Gastrocnemius medialis (tissue), 4 donors: ENCODE measurements at regions of chr11 and their contacts with region 1.

Region 1: DNA sequence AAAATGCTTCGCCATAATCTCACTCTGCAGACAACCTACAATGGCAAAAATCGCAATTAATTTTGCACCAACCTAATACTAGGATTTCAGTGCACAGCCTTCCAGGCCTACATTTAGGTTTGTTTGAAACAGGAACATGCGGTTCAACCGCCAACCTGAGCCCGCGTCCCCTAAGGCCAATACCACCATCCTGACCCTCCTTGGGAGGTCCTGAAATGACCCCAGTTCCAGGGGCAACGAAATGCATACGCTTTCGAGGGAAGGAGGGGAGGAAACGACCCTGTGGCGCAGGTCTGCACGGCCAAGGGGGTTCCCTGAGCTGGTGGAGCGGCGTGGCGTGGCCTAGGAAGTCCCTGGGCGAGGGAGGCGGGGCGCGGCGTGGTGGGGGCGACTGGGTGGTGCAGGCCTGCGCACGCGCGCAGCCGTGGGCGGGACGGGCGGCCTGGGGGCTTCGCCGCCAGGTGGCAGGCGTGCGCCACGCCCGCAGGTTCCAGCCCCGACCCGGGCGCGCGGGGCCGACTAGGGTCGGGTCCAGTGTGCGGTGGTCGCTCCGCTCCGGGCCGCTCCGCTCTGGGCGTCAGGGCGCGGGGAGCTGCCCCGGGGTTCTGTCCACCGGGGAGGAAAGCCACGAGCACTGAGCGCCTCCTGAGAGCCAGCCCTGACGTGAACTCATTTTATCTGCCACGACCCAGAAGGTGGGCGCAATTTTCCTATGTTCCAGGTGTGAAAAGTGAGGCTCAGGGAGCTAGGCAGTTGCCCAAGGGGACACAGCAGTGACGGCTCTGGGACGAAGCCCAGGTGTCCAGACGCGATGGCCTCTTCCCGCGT is 94.1 kb downstream of the SWAP70 start:
- DNase-seq: peak; percentile 67 to 73
- ATAC-seq: peak; percentile 51 to 70
- H3K4me3 ChIP-seq: peak overlapping the region; percentile 61 to 86 (median 69)
- H3K27ac ChIP-seq: peak overlapping the region; percentile 76 to 86 (median 83)
- H3K4me1 ChIP-seq: peaks cover 18 to 25% of the 10 kb centered on the region in 2 donors
- H3K27me3 ChIP-seq: no peaks in the 10 kb centered on the region
- CTCF ChIP-seq: peak in 4 of 5 experiments; percentile 96 to 98 (median 98)
- POLR2A ChIP-seq: peak; percentile 52 to 53

Region 2: DNA sequence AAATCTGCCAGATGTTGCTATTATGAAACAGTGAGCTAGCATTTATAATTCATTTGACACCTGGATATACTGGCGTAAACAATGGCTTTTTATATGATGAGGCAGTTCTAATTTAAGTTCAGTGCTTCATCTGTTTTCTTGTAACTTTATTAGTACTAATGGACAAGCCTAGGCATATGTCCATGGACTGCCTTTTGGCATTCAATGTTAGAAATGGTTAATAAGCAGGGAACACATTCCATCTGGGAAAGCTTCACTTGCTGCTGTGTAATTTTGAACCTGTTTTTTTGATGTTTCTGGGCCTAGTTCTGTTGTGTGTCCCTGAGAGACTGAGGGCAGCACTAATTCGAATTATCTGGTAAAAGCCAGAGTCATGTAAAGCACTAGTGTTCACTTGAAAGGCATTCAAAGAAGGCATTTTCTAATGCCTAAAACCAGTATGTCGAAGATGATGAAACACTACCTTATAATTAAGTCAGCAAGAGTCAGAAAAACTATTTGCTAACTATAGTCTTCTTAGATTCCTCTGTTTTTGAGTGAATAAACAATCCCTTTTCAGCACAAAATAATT is 44.4 kb after region 1 on chr11:
- in situ Hi-C with region 1: no loop called
- intact Hi-C with region 1: loop called (anchors 2 kb)
- DNase-seq: peak in 1 of 2 donors; percentile 25
- ATAC-seq: peak; percentile 96 to 97
- H3K4me3 ChIP-seq: no peak overlapping the region
- H3K27ac ChIP-seq: peak overlapping the region; percentile 72 to 80 (median 76)
- H3K4me1 ChIP-seq: peaks cover 31 to 38% of the 10 kb centered on the region in 2 donors
- H3K27me3 ChIP-seq: no peaks in the 10 kb centered on the region
- CTCF ChIP-seq: no peak
- POLR2A ChIP-seq: no peak

Region 3: GRCh38 chr11:9962722-9963121 is 204.7 kb after region 1 on chr11:
- in situ Hi-C with region 1: loop called in 1 of 4 experiments (anchors 10 kb)
- intact Hi-C with region 1: no loop called
- DNase-seq: no peak
- ATAC-seq: no peak
- H3K4me3 ChIP-seq: no peak overlapping the region
- H3K27ac ChIP-seq: no peak overlapping the region
- H3K4me1 ChIP-seq: no peaks in the 10 kb centered on the region
- H3K27me3 ChIP-seq: no peaks in the 10 kb centered on the region
- CTCF ChIP-seq: no peak
- POLR2A ChIP-seq: no peak

Region 4: GRCh38 chr11:10208131-10208575 is 450.1 kb after region 1 on chr11:
- in situ Hi-C with region 1: no loop called
- intact Hi-C with region 1: loop called (anchors 5 kb)
- DNase-seq: no peak
- ATAC-seq: peak; percentile 61 to 87
- H3K4me3 ChIP-seq: no peak overlapping the region
- H3K27ac ChIP-seq: peak overlapping the region in 1 of 4 donors; percentile 9
- H3K4me1 ChIP-seq: peaks cover 0 to 7% of the 10 kb centered on the region in 2 donors
- H3K27me3 ChIP-seq: no peaks in the 10 kb centered on the region
- CTCF ChIP-seq: peak; percentile 68 to 80 (median 79)
- POLR2A ChIP-seq: no peak

Region 5: GRCh38 chr11:10322830-10323792 is 565.1 kb after region 1 on chr11:
- in situ Hi-C with region 1: loop called (anchors 10 to 25 kb)
- intact Hi-C with region 1: loop called (anchors 1 kb)
- DNase-seq: peak; percentile 37 to 49
- ATAC-seq: peak; percentile 74 to 80
- H3K4me3 ChIP-seq: no peak overlapping the region
- H3K27ac ChIP-seq: peak overlapping the region; percentile 56 to 75 (median 68)
- H3K4me1 ChIP-seq: peaks cover 22 to 36% of the 10 kb centered on the region in 2 donors
- H3K27me3 ChIP-seq: no peaks in the 10 kb centered on the region
- CTCF ChIP-seq: peak; percentile 54 to 64 (median 63)
- POLR2A ChIP-seq: no peak

Region 6: DNA sequence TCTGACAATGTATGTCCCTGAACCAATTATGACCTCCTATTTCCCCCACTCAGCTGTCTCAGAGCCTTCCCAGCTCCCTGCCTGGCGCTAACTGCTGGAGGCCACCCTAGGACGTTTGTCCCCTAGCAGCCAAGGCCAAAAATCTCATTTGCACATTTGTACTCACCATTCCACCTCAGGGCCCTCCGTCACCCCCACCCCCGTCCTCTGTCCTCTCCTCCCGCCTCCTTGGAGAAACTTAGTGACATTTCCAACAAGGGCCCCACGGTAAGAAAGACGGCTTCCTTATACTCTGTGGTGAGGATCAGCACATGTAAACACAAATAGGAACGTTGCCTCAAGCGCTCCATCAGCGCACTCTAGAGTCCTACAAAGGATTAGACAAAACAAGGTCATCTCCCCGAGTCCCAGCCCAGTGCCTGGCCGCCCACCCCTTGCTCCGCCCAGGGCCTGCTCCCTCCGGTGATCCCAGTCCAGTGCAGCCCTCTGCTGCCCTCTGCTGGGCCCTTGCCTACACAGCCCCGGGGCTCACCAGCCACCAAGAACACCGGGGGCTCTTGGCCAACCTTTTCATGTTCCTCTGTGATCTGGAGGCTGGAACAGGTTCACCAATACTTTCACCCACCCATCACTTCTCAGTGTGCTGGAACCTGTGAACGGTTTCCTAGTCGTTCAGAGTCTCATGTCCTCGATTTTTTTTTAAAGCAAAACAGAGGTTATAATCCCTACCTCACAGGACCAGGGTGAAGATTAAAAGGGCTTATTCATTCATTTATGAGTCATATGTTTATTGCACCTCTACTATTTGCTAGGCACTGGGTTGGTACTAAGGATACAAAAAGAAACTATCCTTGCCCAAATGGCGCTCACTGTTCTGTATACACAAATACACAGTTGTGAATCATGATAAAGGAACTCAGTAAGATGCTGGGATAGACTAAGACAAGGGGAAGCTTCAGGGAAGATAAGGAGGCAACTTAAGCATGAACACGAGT is 977.8 kb after region 1 on chr11:
- in situ Hi-C with region 1: loop called in 1 of 4 experiments (anchors 25 kb)
- intact Hi-C with region 1: loop called (anchors 10 kb)
- DNase-seq: peak; percentile 92 to 94
- ATAC-seq: peak; percentile 94 to 95
- H3K4me3 ChIP-seq: peak overlapping the region in 3 of 4 donors; percentile 19 to 35 (median 30)
- H3K27ac ChIP-seq: peak overlapping the region; percentile 76 to 81 (median 80)
- H3K4me1 ChIP-seq: peaks cover 15 to 20% of the 10 kb centered on the region in 2 donors
- H3K27me3 ChIP-seq: no peaks in the 10 kb centered on the region
- CTCF ChIP-seq: peak; percentile 97 to 99 (median 98)
- POLR2A ChIP-seq: no peak